Right cardiac atrium (tissue), 5 donors: ENCODE measurements at regions of chr4 and their contacts with region 1.

Region 1: DNA sequence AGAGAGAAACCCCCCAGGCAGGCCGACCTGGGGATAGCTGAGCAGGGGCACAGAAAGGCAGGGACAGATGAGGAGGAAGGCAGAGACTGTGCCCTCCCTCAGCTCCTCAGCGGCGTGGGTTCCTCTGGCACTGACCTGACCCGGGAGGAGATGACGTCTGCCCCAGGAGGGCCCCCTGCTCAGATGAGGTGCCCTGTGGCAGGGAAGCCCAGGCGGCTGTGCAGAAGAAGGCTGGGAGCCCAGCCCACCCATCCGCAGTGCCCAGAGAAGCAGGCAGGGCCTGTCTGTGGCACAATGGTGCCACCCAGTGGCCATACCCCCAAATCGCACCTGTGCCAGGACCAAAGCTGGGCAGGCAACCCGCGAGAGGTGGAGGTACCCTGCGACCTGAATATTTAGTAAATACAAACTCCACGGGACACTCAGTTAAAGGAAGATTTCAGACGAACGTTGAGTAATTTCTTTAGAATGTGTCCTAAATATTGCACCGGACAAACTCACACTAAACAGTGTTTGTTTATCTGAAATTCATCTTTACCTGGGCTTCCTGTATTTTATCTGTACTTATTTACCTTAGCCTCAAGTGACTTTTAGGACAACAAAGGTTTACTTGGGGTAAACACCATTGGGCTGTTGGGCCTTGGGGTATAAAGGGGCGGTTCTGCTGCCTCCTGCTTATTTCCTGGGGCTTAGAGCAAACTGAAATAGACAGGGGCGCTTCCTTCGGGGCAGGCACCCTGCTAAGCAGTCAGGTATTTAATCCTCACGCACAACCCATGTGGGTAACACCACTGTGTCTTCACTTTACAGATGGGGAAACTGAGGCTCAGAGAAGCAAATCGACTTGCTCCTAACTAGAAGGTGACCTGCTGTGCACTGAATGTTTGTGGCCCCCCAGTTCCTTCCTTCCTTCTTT is 46.5 kb upstream of the HMX1 start:
- DNase-seq: peak; percentile 33 to 78 (median 71)
- ATAC-seq: peak; percentile 40 to 76
- H3K4me3 ChIP-seq: no peak overlapping the region
- H3K27ac ChIP-seq: no peak overlapping the region
- H3K4me1 ChIP-seq: no peaks in the 10 kb centered on the region
- H3K27me3 ChIP-seq: no peaks in the 10 kb centered on the region

Region 2: GRCh38 chr4:8607603-8608481 is 310.3 kb before region 1 on chr4:
- intact Hi-C with region 1: loop called in 3 of 4 experiments (anchors 10 kb)
- DNase-seq: peak in 2 of 3 donors; percentile 74 to 75
- ATAC-seq: no peak
- H3K4me3 ChIP-seq: no peak overlapping the region
- H3K27ac ChIP-seq: no peak overlapping the region
- H3K4me1 ChIP-seq: no peaks in the 10 kb centered on the region
- H3K27me3 ChIP-seq: no peaks in the 10 kb centered on the region

Region 3: DNA sequence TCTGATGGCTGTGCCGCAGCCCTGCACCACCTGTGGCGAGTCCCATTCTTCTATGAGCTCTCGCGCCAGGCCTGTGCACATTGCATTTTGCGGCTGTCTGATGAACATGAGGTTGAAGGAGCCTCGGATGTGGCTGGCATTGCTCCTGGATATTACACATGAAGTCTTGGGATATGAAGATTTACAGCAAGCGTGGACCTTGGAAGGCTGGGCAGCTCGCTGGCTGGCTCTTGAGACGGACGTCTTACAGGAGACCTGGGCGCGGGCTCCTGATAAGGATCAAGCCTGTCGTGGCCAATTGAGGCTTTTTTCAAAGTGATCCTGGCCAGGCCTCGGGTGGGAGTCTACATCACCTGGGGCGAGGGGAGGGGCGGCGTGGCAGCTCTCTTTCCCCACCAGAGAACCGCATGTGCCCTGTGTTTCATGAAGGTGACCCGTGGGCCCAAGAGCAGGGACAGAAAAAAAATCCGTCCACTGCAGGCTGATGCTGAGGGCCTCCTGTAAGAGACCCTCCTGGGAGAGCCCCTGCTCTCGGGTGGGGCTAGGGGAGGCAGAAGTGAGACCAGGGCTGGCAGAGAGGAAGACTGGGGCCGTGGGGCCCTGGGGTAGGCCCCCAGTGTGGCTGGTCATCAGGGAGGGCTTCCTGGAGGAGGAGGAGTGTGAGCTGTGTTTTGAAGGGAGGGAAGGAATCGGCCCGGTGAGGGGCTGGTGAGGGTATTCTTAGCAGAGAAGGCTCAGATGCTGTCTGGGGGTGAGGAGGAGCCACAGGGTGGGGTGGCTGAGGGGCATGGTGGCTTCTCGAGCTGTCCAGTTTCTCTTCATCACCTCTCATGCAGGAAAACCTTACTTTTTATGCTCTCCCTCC is 302.0 kb before region 1 on chr4:
- intact Hi-C with region 1: loop called in 1 of 4 experiments (anchors 10 kb)
- DNase-seq: peak; percentile 1 to 34 (median 33)
- ATAC-seq: no peak
- H3K4me3 ChIP-seq: no peak overlapping the region
- H3K27ac ChIP-seq: no peak overlapping the region
- H3K4me1 ChIP-seq: no peaks in the 10 kb centered on the region
- H3K27me3 ChIP-seq: no peaks in the 10 kb centered on the region